RWPE1 (cell line): ENCODE measurements at regions of chr6 and their contacts with region 1.

Region 1: GRCh38 chr6:26097268-26097875 is 10.1 kb downstream of the HFE start:
- DNase-seq: peak; percentile 44
- H3K27ac ChIP-seq: no peak overlapping the region
- CTCF ChIP-seq: peak; percentile 78

Region 2: DNA sequence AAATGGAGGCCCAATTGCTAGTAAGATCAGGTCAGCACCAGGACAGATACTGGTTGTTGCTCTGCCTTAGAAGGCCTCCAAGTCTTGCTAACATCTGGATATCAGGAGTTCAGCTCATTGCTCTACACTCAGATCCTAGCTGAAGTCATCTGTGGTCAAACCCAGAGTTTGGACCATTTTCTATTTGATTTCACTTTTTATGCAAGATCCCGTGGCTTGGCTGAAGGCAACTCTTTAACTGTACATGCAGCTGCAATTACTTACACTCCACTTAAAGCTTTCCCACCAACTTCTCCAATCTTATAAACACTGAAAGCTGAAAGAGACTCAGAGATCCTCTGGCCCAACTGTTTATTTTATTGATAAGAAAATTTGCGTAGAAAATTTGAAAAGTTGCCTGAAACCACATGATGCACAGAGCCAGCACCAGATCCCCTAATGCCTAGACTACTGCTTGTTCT is 169.6 kb before region 1 on chr6:
- CTCF ChIA-PET with region 1: no interaction called
- POLR2A ChIA-PET with region 1: no interaction called
- DNase-seq: no peak
- H3K27ac ChIP-seq: no peak overlapping the region
- CTCF ChIP-seq: no peak

Region 3: DNA sequence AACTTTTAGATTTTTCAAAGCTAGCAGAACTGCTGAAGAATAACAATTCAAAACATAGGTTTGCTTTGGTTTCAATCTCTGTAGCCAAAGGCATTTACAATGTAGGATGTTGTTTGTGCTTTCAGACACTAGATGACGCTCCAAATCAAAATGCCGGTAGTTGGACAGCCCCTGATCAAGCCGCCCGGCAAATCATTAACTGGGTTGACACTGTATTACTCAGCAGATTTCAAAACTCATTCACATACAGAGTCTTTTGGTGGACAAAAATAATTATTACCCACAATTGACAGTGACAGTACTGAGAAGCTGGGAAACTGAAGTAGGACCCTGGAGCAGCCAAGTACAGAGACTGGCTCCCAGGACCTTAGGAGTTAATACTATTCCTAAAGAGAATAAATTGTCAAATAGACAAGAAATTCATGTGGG is 31.4 kb before region 1 on chr6:
- CTCF ChIA-PET with region 1: interaction called, 26 read pairs
- POLR2A ChIA-PET with region 1: no interaction called
- DNase-seq: peak; percentile 79
- H3K27ac ChIP-seq: no peak overlapping the region
- CTCF ChIP-seq: peak; percentile 93